CD14-positive monocyte (primary cell): ENCODE measurements at regions of chr1 and their contacts with region 1.

Region 1: DNA sequence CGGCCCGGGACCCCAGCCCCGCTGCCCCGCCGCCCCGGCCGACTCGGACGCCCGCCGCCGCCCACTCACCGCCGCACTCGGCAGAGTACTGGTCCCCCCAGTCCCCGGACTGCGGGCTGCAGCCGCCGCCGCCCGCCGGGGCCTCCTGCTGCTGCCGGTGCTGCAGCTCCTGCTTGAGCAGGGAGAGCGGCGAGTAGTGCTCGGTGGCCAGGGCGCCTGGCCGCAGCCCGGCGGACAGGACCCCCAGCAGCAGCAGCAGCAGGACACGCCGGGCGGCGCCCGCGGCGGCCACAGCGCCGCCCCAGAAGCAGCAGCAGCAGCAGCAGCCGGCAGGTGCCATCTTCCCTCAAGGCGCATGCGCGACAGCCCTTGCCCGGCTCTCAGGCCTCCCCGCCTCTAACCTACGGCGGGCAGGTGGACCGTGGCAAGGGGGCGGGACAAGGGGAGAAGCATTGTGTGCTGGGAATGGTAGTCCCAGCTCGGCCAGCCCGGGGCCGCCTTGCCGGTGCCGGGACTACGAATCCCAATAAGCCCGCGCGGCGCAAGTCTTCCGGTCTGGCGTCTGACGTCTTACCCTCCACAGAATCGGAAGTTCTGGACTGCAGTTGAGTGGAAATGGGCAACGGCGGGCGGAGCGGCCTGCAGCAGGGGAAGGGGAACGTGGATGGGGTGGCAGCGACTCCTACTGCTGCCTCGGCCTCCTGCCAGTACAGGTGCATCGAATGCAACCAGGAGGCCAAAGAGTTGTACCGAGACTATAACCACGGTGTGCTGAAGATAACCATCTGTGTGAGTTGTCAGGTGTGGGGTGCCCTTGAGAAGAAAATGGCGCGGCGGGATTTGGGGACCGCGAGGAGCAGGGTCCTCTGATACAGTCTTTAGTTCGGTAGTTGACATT is at the starts of genes ARV1 and TTC13:
- DNase-seq: peak; percentile 96 to 99 (median 99)
- H3K4me3 ChIP-seq: peak within 1 kb of the TSS; percentile 60 to 81 (median 66)
- H3K4me3 Mint-ChIP-seq: peak within 1 kb of the TSS; percentile 90 to 98
- H3K27ac ChIP-seq: peak within 1 kb of the TSS; percentile 41 to 80
- H3K27ac Mint-ChIP-seq: peak within 1 kb of the TSS; percentile 89 to 96 (median 95)
- H3K4me1 ChIP-seq: peaks cover 31 to 36% of the 10 kb centered on the region in 2 donors
- H3K4me1 Mint-ChIP-seq: peaks cover 22% of the 10 kb centered on the region
- H3K27me3 ChIP-seq: no peaks in the 10 kb centered on the region
- H3K27me3 Mint-ChIP-seq: peaks cover 0 to 2% (median 0%) of the 10 kb centered on the region in 3 donors
- CTCF ChIP-seq: peak; percentile 60
- polyA plus RNA-seq, gene ARV1: 7.7 to 19.2 (median 15.0) TPM
- polyA plus RNA-seq, gene TTC13: 9.2 to 24.4 (median 10.8) TPM

Region 2: DNA sequence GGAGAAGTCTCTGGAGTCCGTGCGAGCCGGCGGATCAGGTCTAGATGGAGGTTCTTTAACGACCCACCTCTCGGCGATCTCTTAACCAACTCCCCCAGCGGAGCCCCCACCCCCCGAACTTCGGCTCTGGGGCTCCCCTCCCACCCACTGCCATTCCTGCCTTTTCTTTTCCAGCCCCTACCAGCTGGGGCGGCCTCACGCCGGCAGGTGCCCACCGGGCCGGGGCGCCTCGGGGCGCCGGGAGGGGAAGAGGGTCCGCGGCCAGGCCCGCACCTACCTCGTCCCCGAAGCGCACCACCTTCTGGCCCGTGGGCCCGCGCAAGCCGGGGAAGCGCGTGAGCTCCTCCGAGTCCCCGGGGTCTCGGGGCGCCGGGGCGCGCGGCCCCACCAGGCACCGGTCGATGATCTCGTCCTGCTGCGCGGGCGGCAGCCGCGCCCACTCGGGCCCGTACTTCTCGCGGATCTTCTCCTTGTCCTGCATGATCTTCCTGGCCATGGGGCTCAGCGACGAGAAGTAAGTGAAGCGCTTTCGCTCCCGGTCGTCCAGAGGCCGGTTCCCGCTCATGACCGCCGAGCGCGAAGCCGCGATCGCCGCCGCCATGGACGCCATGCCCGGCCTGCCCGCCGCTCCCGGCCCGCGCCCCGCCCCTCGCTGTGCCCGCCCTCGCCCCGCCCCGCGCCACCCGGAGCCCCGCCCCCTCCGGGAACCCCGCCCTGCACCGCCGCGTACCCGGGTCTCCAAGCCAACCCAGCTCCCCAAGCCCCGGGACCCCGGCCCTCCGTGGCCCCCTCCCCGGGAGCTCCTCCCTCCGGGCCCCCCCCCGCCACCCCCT is 110.6 kb before region 1 on chr1 and contains the start of gene C1orf198:
- intact Hi-C with region 1: loop called in 1 of 2 experiments (anchors 5 kb)
- DNase-seq: peak; percentile 35 to 57 (median 50)
- H3K4me3 ChIP-seq: peak within 1 kb of the TSS; percentile 48 to 91 (median 86)
- H3K4me3 Mint-ChIP-seq: peak within 1 kb of the TSS; percentile 93 to 95
- H3K27ac ChIP-seq: no peak within 1 kb of the TSS
- H3K27ac Mint-ChIP-seq: peak within 1 kb of the TSS in 4 of 7 donors; percentile 50 to 85 (median 70)
- H3K4me1 ChIP-seq: peaks cover 11 to 15% of the 10 kb centered on the region in 2 donors
- H3K4me1 Mint-ChIP-seq: peaks cover 15% of the 10 kb centered on the region
- H3K27me3 ChIP-seq: peaks cover 24 to 39% of the 10 kb centered on the region in 2 donors
- H3K27me3 Mint-ChIP-seq: peaks cover 37 to 51% (median 49%) of the 10 kb centered on the region in 3 donors
- CTCF ChIP-seq: no peak
- polyA plus RNA-seq, gene C1orf198: 1.3 to 2.7 (median 1.6) TPM

Region 3: DNA sequence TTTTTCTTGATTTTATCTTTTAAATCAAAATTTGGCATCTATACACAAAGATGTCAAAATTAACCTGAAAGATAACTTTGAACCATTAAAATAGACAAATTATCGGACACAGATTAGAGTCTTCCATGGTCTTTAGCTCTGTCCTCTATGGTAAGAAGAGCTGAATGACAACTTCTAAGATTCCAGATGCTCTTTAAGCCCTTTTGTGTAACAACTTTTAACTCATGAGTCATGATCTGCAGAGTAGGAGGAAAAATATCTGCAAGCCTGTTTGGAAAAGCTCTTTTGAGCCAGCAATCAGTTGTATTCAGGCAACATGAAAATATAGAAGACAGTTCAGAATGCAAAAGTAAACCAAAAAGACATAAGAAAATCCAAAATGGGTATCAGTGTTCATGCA is 37.9 kb before region 1 on chr1:
- intact Hi-C with region 1: no loop called
- DNase-seq: no peak
- H3K4me3 ChIP-seq: no peak overlapping the region
- H3K4me3 Mint-ChIP-seq: no peak overlapping the region
- H3K27ac ChIP-seq: no peak overlapping the region
- H3K27ac Mint-ChIP-seq: no peak overlapping the region
- H3K4me1 ChIP-seq: no peaks in the 10 kb centered on the region
- H3K4me1 Mint-ChIP-seq: no peaks in the 10 kb centered on the region
- H3K27me3 ChIP-seq: no peaks in the 10 kb centered on the region
- H3K27me3 Mint-ChIP-seq: no peaks in the 10 kb centered on the region
- CTCF ChIP-seq: no peak

Region 4: GRCh38 chr1:231040019-231040799 is 61.5 kb after region 1 on chr1 and contains the start of gene FAM89A:
- intact Hi-C with region 1: loop called in 1 of 2 experiments (anchors 10 kb)
- DNase-seq: peak; percentile 34 to 56 (median 43)
- H3K4me3 ChIP-seq: peak within 1 kb of the TSS; percentile 48 to 78 (median 60)
- H3K4me3 Mint-ChIP-seq: peak within 1 kb of the TSS; percentile 78 to 89
- H3K27ac ChIP-seq: no peak within 1 kb of the TSS
- H3K27ac Mint-ChIP-seq: peak within 1 kb of the TSS in 2 of 7 donors; percentile 35 to 44
- H3K4me1 ChIP-seq: peaks cover 35 to 37% of the 10 kb centered on the region in 2 donors
- H3K4me1 Mint-ChIP-seq: peaks cover 35% of the 10 kb centered on the region
- H3K27me3 ChIP-seq: peaks cover 13 to 38% of the 10 kb centered on the region in 2 donors
- H3K27me3 Mint-ChIP-seq: peaks cover 36 to 54% (median 46%) of the 10 kb centered on the region in 3 donors
- CTCF ChIP-seq: no peak
- polyA plus RNA-seq, gene FAM89A: 2.0 to 11.7 (median 4.4) TPM